K562 (cell line): ENCODE measurements at regions of chr5 and their contacts with region 1.

Region 1: GRCh38 chr5:132180134-132180745 is 47.4 kb downstream of the P4HA2 start:
- DNase-seq: peak; percentile 46 to 87 (median 60)
- ATAC-seq: peak; percentile 64
- H3K4me3 ChIP-seq: peak overlapping the region; percentile 56
- H3K27ac ChIP-seq: peak overlapping the region; percentile 82
- H3K4me1 ChIP-seq: peaks cover 16 to 37% of the 10 kb centered on the region in 2 experiments
- H3K27me3 ChIP-seq: no peaks in the 10 kb centered on the region
- CTCF ChIP-seq: peak; percentile 81 to 94 (median 88)
- EP300 ChIP-seq: peak; percentile 46
- POLR2A ChIP-seq: no peak
- RAD21 ChIP-seq: peak; percentile 66 to 72

Region 2: DNA sequence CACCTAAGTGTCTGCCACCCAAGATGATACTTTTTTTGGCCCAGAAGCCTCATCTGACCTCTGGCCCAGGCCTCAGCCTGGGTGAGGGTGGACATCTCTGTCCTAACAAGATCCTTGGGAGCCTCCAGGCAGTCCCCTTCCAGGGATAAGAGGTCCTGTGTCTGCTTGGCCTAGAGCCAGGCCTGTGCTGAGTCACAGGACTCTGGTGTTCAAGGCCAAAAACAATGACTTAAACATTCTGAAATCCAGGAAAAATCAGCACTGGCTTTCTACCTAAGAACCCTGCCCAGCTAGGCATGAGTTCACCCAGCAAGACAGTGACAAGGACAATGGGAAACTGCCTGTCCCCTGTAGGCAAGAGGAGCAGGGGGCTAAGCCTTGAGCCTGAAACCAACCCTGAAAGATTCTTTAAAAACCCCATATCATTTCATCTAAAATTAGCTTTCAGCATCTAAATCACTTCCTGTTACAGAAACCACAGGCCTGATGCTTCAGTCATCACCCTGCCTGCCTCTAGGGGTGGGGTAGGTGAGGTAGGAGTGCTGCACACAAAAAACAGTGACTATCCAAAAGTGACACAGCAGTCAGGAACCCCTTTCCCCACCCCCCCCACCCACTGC is 76.8 kb before region 1 on chr5:
- CTCF ChIA-PET with region 1: no interaction called
- POLR2A ChIA-PET with region 1: interaction called, 3 read pairs
- in situ Hi-C with region 1: no loop called
- intact Hi-C with region 1: loop called (anchors 2 kb)
- DNase-seq: peak; percentile 75 to 89 (median 83)
- ATAC-seq: peak; percentile 88
- H3K4me3 ChIP-seq: no peak overlapping the region
- H3K27ac ChIP-seq: peak overlapping the region; percentile 75; the same call in 2 of the 3 replicates
- H3K4me1 ChIP-seq: peaks cover 28 to 57% of the 10 kb centered on the region in 2 experiments
- H3K27me3 ChIP-seq: no peaks in the 10 kb centered on the region
- CTCF ChIP-seq: 0 out of 6 replicates have a peak, but pooled peaks of 1 of the 3 experiments have one; percentile 6
- EP300 ChIP-seq: peak; percentile 73
- POLR2A ChIP-seq: no peak
- RAD21 ChIP-seq: 0 out of 4 replicates have a peak, but pooled peaks of 1 of the 2 experiments have one; percentile 5

Region 3: DNA sequence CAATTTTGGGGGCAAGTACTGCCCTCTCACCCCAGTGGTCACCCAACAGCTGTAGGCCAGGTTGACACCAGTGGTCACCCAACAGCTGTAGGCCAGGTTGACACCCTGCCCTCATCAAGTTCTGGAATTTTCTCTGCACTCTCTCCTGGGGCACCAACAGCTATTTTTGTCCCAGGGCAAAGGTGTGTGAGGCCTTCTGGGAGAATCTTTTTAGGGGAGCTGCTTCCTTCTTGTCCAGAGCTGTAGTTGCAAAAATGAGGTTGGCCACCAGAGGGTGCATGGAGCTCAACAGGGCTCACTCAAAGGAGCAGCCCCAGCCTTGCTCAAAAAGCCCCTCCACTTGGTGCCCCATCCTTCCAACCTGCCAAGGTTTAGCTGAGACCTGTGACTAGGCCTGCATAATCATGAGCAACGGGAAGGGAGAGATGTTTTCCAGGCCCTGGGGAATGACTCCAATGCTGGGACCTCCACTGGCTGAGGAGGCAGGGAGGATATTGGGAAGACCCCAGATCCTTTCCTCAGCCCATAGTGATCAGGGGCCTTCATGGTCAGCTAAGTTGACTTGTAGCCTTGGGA is 58.0 kb after region 1 on chr5:
- CTCF ChIA-PET with region 1: interaction called, 3 read pairs
- POLR2A ChIA-PET with region 1: no interaction called
- in situ Hi-C with region 1: no loop called
- intact Hi-C with region 1: loop called (anchors 5 kb)
- DNase-seq: peak; percentile 64 to 86 (median 77)
- ATAC-seq: peak; percentile 94
- H3K4me3 ChIP-seq: no peak overlapping the region
- H3K27ac ChIP-seq: no peak overlapping the region
- H3K4me1 ChIP-seq: no peaks in the 10 kb centered on the region; a peak in 2 of 5 replicates
- H3K27me3 ChIP-seq: no peaks in the 10 kb centered on the region
- CTCF ChIP-seq: peak; percentile 80 to 87 (median 81)
- EP300 ChIP-seq: no peak
- POLR2A ChIP-seq: no peak
- RAD21 ChIP-seq: peak; percentile 41 to 86

Region 4: GRCh38 chr5:132315529-132316083 is 135.4 kb after region 1 on chr5:
- CTCF ChIA-PET with region 1: no interaction called
- POLR2A ChIA-PET with region 1: no interaction called
- in situ Hi-C with region 1: no loop called
- intact Hi-C with region 1: loop called (anchors 1 kb)
- DNase-seq: peak; percentile 93 to 96 (median 95)
- ATAC-seq: peak; percentile 82
- H3K4me3 ChIP-seq: no peak overlapping the region
- H3K27ac ChIP-seq: peak overlapping the region; percentile 75
- H3K4me1 ChIP-seq: peaks cover 70 to 73% of the 10 kb centered on the region in 2 experiments
- H3K27me3 ChIP-seq: no peaks in the 10 kb centered on the region
- CTCF ChIP-seq: peak; percentile 54 to 79 (median 69)
- EP300 ChIP-seq: peak; percentile 93
- POLR2A ChIP-seq: no peak
- RAD21 ChIP-seq: peak; percentile 68 to 91

Region 5: GRCh38 chr5:132410451-132411381 is 230.5 kb after region 1 on chr5:
- CTCF ChIA-PET with region 1: no interaction called
- POLR2A ChIA-PET with region 1: no interaction called
- in situ Hi-C with region 1: no loop called
- intact Hi-C with region 1: loop called (anchors 2 kb)
- DNase-seq: peak; percentile 88 to 91 (median 90)
- ATAC-seq: peak; percentile 99
- H3K4me3 ChIP-seq: peak overlapping the region; percentile 60
- H3K27ac ChIP-seq: peak overlapping the region; percentile 81
- H3K4me1 ChIP-seq: peaks cover 17% of the 10 kb centered on the region in 2 experiments; a peak in 4 of 5 replicates
- H3K27me3 ChIP-seq: no peaks in the 10 kb centered on the region
- CTCF ChIP-seq: peak; percentile 81 to 93 (median 85)
- EP300 ChIP-seq: peak; percentile 12; the same call in 1 of the 2 replicates
- POLR2A ChIP-seq: peak; percentile 72
- RAD21 ChIP-seq: peak; percentile 83 to 88

Region 6: DNA sequence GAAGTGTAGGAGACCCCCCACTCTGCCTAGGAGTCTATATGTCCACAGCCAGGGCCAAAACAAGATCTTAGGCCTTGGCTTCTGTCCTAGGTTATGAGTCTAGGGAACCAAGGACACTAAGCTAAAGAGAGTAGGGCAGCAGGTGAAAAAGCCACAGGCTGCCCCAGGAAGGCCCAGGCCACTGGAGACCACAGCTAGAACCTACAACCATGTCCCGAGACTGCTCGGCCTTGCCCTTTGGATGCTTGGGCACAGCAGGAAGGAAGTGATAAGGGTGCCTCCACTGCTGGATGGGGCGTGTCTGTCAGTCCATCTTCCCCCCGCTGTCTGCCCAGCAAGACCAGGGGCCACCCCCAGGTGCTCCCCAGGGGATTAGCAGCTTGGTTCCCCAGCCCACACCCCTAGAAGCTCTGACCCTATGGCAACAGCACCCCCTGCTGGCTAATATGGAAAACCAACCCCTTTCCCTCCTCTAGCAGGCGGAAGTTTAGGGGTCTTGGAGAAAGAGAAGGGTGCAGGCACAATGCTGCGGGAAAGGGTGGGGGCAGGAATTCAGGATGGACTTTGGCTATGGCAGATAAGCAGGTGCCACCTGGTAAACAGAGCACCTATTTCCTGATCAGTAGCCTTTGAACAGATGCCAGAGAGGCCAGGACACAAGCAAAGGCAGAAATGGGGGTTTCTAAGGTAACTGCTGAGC is 320.8 kb after region 1 on chr5:
- CTCF ChIA-PET with region 1: interaction called, 5 read pairs
- POLR2A ChIA-PET with region 1: no interaction called
- in situ Hi-C with region 1: loop called (anchors 10 kb)
- intact Hi-C with region 1: loop called (anchors 2 kb)
- DNase-seq: peak; percentile 85 to 94 (median 91)
- ATAC-seq: peak; percentile 70
- H3K4me3 ChIP-seq: no peak overlapping the region
- H3K27ac ChIP-seq: no peak overlapping the region
- H3K4me1 ChIP-seq: peaks cover 26 to 41% of the 10 kb centered on the region in 2 experiments; a peak in 4 of 5 replicates
- H3K27me3 ChIP-seq: no peaks in the 10 kb centered on the region
- CTCF ChIP-seq: peak; percentile 91 to 94 (median 93)
- EP300 ChIP-seq: peak; percentile 26; the same call in 1 of the 2 replicates
- POLR2A ChIP-seq: no peak
- RAD21 ChIP-seq: peak; percentile 98 to 99